GM18951 (cell line): ENCODE measurements at regions of chr22 and their contacts with region 1.

Region 1: GRCh38 chr22:35330258-35330861 is 30.7 kb downstream of the TOM1 start:
- POLR2A ChIP-seq: no peak

Region 2: DNA sequence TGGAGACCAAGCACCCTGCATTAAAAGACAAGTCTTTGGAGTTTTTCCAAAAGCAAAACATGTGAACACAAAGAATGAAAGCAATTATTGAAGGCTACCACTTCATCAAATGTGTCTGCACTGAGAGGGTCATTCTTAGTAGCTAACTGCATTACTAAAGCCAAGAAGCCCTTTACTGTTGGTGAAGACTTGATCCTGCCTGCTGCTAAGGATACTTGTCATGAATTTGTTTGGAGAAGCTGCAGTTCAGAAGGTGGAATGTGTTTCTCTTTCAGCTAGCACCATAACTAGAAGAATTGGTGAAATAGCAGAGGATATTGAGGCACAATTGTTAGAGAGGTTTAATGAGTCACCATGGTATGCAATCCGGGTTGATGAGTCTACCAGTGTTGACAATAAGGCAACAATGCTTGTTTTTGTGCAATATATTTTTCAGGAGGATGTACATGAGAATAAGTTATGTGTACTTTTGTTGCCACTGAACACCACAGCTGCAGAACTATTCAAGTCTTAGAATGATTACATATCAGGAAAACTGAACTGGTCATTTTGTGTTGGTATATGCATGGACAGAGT is 721.7 kb before region 1 on chr22:
- in situ Hi-C with region 1: no loop called
- POLR2A ChIP-seq: no peak

Region 3: DNA sequence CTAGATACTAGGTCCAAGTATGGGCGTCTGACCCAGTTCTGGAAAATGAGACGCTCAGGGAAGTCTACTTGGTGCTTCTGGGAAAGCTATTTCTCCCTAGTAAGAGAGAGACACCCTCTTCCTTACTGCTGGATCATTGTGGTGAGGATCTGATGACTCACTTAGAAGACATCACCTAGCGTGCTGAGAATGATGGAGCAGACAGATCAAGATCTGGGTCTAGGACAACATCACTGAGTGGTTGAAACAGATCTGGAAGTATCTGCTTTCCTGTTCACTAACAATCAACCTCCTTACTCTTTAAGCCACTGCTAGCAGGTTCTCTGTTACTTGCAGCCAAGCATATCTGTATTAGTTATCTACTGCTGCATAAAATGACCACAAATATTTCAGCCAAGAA is 111.3 kb before region 1 on chr22:
- in situ Hi-C with region 1: no loop called
- POLR2A ChIP-seq: no peak

Region 4: DNA sequence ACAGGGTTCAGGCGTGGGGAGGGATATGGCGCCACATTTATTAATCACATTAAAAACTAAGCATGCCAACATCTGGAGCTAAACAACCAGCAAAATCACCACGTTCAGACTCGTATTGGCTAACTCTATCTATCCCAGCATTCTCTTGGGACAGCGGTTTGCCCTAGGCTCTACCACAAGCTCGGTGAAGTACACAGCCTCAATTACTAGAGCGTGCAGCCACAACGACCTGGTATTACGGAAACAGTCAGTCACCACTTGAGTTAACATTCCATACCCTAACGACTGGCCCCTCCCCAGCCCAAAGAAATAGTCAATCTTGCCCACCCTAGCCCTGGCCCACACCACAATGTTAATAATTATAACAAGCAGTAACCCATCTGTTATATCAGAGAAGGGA is 419.4 kb after region 1 on chr22:
- in situ Hi-C with region 1: loop called (anchors 25 kb)
- POLR2A ChIP-seq: no peak

Region 5: DNA sequence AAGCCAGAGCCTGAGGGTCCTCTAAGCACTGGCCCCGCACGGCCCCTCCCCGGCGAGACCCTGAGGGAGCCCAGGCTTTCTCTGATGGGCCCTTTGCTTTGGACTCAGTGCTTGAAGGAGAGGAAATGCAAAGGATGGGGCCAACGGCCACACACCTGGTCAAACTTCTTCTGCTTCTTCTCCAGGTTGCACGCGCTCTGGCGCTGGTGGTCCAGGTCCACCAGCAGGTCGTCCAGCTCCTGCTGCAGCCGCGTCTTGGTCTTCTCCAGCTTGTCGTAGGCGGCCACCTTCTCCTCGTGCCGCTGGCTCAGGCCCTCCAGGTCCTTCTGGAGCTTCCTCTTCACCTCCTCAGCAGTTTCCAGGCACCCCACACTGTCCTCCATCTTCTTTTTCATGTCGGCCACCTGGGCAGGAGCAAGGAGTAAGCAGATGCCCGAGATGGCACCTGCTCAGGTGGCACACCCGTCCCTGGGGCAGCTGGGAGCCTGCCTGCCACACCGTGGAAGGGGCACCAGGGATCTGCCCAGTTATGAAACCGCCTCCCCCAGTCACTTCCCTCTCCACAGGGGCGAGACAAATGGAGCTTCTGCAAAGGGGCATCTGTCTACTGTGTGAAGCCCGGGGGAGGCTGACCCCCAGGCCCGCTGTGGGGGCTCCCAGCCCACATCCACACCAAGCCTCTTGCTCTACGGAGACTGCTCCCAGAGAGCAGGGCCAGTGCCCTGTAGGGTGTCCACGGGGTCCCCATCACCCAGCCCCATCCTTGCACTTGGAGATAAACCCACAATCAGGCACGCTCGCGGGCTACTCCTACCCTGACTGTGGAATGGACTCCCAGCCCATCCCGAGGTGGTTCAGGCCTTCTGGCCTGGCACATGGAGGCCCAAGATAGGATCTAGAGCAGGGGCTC is 961.7 kb after region 1 on chr22:
- in situ Hi-C with region 1: no loop called
- POLR2A ChIP-seq: no peak